OCI-LY7 (cell line): ENCODE measurements at regions of chr19 and their contacts with region 1.

Region 1: DNA sequence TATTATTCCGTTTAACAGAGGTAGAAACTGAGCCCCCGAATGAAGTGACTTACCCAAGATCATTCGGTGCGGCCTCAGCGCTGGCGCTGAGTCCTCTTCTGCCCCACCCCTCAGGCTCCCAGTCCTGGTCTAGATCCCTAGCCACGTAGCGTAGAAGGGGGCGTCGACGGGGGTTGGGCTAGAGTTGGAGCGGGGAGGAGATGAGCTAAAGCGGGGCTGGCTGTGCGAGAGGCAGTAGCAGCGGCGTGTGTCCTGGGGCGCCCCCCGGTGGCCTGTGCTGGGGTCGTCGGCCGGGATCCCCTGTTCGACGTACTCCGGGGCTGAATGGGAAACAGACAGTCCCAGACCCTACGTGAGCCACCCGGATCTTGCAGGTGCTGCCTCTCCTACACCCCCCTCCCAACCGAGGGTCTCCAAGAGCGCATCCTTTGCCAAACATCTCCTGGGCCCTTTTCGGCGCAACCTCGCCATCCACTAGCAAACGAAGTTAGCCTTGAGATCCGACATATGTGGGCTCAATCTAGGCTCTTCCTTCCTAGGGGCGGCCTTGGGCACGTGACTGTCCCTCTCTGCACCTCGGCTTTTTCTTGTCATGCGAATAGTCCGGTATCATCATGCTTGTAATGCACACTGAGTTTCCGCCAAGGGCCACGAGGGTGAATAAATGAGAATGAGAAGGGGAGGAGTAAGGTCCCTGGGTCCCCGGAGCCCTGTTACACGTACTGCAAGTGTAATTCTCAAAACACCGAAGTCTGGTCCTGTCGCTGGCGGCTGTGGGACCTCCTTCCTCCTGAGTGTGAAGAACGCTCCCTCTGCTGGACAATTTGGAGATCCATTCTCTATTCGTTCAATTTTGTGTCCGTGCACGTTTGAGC is 47.7 kb downstream of the CYP4F22 start:
- DNase-seq: peak; percentile 92
- H3K4me3 ChIP-seq: peak overlapping the region; percentile 21
- H3K27ac ChIP-seq: no peak overlapping the region
- H3K4me1 ChIP-seq: peaks cover 8% of the 10 kb centered on the region
- CTCF ChIP-seq: peak; percentile 79

Region 2: DNA sequence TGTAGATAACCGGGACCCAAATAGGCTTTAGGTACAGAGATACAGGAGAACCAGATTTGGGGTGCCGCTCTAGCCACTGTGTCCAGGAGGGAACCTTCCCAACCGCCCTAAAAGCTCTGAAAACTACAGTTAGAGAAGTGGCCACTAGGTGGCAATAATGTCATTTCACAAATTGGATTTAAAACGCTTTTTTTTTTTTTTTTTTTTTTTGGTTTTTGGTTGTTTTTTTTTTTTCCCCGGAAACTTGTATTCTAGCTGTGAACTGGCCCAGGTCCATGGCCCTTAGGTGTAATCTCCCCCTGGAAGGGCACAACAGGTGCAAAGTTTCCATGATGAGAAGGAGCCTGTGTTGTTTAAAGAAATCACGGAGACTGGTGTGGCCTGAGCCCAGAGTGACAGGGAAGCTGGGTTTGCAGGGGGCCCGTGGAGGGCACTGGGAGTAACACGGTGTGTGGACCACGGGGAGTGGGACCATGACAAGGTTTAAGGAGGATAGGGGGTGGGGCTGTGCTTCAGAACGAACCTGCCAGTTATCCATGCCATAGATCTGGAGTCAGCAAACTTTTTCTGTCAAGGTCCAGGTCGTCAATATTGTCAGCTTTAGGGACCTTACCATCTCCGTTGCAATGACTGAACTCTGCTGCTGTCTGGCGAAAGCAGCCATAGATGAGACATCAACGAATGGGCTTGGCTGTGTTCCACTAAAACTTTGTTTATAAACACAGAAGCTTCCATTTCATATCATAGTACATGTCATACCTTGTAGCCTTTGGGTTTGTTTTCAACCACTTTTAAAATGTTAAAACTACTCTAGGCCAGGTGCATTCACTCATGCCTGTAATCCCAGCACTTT is 463.9 kb before region 1 on chr19:
- CTCF ChIA-PET with region 1: no interaction called
- POLR2A ChIA-PET with region 1: interaction called, 4 read pairs
- intact Hi-C with region 1: loop called (anchors 1 kb)
- DNase-seq: peak; percentile 85
- H3K4me3 ChIP-seq: no peak overlapping the region
- H3K27ac ChIP-seq: no peak overlapping the region
- H3K4me1 ChIP-seq: peaks cover 8% of the 10 kb centered on the region
- CTCF ChIP-seq: peak; percentile 83

Region 3: GRCh38 chr19:15177269-15178116 is 378.5 kb before region 1 on chr19:
- CTCF ChIA-PET with region 1: no interaction called
- POLR2A ChIA-PET with region 1: no interaction called
- intact Hi-C with region 1: loop called (anchors 1 kb)
- DNase-seq: peak; percentile 78
- H3K4me3 ChIP-seq: no peak overlapping the region
- H3K27ac ChIP-seq: no peak overlapping the region
- H3K4me1 ChIP-seq: no peaks in the 10 kb centered on the region
- CTCF ChIP-seq: peak; percentile 80

Region 4: GRCh38 chr19:15332311-15332996 is 223.5 kb before region 1 on chr19 and contains the start of gene BRD4:
- CTCF ChIA-PET with region 1: no interaction called
- POLR2A ChIA-PET with region 1: no interaction called
- intact Hi-C with region 1: loop called (anchors 5 kb)
- DNase-seq: peak; percentile 82
- H3K4me3 ChIP-seq: peak within 1 kb of the TSS; percentile 100
- H3K27ac ChIP-seq: peak within 1 kb of the TSS; percentile 97
- H3K4me1 ChIP-seq: peaks cover 52% of the 10 kb centered on the region
- CTCF ChIP-seq: no peak
- total RNA-seq, gene BRD4: 22.6 and 33.6 TPM in 2 replicates

Region 5: GRCh38 chr19:15418588-15419412 is 137.2 kb before region 1 on chr19 and contains the start of gene AKAP8L:
- CTCF ChIA-PET with region 1: interaction called, 11 read pairs
- POLR2A ChIA-PET with region 1: interaction called, 3 read pairs
- intact Hi-C with region 1: loop called (anchors 1 kb)
- DNase-seq: peak; percentile 100
- H3K4me3 ChIP-seq: peak within 1 kb of the TSS; percentile 84
- H3K27ac ChIP-seq: peak within 1 kb of the TSS; percentile 69
- H3K4me1 ChIP-seq: peaks cover 22% of the 10 kb centered on the region
- CTCF ChIP-seq: peak; percentile 82
- total RNA-seq, gene AKAP8L: 119 and 122 TPM in 2 replicates

Region 6: DNA sequence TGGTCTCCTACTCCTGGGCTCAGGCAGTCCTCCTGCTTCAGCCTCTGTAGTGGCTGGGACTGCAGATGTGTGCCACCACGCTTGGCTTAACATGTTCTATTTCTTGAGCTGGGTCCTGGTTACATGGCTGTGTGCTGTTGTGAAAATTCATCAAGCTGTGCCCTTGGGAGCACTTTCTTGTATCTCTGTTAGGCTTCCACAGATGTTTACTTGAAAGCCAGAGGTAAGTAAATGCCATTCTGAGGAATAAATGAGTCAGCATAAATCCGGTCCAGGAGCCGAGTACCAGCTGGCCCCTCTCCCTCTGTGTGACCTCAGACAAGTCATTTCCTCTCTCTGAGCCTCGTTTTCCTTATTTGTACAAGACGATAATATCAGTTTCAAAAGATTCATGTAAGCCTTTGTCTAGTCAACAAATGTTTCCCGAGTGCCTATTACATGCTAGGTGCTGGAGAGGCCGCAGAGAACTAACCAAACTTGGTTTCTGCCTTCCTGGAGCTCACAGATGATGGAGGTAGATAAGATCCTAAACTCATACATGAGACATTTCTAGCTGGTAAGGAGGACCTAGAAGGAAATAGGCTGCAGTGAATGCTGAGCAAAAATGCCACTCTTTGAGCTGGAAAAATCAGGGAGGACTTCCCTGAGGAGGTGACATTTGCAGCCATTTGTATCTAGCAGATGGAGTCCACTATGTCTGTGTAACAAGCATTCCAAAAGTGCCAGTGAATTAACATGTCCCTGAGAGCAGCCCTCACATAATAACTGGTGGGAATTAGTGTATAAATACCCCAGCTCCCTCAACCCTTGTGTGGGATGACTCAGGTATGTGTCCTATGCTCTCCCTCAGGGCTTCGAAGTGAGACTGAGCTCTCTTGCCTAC is 88.9 kb before region 1 on chr19:
- CTCF ChIA-PET with region 1: no interaction called
- POLR2A ChIA-PET with region 1: no interaction called
- intact Hi-C with region 1: loop called (anchors 10 kb)
- DNase-seq: peak; percentile 55
- H3K4me3 ChIP-seq: peak overlapping the region; percentile 5
- H3K27ac ChIP-seq: peak overlapping the region; percentile 56
- H3K4me1 ChIP-seq: peaks cover 33% of the 10 kb centered on the region
- CTCF ChIP-seq: no peak

Region 7: DNA sequence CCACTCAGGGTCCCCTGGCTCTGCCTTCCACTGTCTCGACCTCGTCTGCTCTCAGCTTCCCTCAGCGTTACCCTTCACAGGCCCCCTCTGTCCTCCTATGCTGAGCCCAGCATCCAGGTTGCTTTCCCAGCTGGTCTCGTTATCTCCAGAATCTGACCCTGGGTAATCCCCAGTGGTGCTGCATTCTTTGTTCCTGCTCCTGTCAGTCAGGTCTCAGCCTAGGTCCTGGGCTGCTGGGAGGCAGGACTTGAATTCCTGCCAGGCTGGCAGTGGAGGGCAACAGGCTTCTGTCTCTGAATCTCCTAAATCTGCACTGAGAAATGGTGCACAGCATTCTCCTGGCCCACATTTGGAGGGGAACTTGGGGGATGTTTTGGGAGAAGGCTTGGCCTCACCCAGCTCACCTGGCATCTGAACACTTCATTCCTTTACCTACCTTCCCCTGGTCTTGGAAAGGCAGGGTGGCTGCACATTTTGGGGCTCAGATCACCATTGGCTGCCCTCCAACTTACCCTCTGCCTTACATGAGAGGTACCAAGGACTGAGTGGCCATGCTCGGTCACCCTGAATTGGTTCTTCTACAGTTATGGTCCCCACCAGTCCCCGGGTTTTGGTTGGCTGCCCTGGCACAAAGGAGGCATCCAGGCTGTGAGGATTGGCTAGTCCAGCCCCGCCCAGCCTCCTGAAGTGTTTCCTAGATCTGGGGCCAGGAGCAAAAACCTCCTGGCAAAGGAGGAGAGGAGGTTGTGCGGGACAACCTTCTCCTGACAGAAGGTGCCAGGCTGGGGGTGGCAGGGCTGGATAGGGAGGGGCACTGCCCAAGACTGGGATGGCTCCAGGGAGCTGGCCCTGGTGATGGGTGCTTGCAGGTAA is 58.7 kb after region 1 on chr19 and contains the start of gene CYP4F8:
- CTCF ChIA-PET with region 1: no interaction called
- POLR2A ChIA-PET with region 1: no interaction called
- intact Hi-C with region 1: no loop called
- DNase-seq: no peak
- H3K4me3 ChIP-seq: no peak within 1 kb of the TSS
- H3K27ac ChIP-seq: no peak within 1 kb of the TSS
- H3K4me1 ChIP-seq: no peaks in the 10 kb centered on the region
- CTCF ChIP-seq: no peak
- total RNA-seq, gene CYP4F8: not detected in 2 replicates